AG04449 (cell line): ENCODE measurements at regions of chr5 and their contacts with region 1.

Region 1: DNA sequence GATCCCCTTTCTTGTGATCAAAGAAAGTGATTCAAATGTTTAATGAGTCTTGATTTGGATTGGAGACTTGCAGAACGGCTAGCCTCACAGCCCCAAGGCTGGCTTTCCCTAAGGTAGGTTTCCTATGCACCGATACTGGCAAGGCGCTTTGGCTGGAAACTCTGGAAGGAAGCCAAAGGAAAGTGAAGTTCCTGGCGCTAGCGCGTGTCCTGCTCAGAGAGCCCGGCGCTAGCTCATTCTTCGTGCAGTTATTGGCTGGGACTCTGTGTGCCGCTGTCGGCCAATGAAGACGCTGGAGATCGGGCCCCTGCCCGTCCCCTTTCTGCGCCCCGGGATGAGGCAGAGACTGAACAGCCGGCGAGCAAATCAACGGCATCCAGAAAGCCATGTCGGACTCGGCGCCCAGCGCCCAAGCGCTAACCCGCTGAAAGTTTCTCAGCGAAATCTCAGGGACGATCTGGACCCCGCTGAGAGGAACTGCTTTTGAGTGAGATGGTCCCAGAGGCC is at the start of gene PCDHGC3:
- DNase-seq: peak; percentile 77
- H3K4me3 ChIP-seq: peak within 1 kb of the TSS; percentile 84
- CTCF ChIP-seq: peak; percentile 50

Region 2: GRCh38 chr5:141420855-141421496 is 54.7 kb before region 1 on chr5 and contains the start of gene PCDHGA11:
- CTCF ChIA-PET with region 1: interaction called, 11 read pairs
- POLR2A ChIA-PET with region 1: no interaction called
- DNase-seq: no peak
- H3K4me3 ChIP-seq: peak within 1 kb of the TSS; percentile 57
- CTCF ChIP-seq: peak; percentile 41

Region 3: DNA sequence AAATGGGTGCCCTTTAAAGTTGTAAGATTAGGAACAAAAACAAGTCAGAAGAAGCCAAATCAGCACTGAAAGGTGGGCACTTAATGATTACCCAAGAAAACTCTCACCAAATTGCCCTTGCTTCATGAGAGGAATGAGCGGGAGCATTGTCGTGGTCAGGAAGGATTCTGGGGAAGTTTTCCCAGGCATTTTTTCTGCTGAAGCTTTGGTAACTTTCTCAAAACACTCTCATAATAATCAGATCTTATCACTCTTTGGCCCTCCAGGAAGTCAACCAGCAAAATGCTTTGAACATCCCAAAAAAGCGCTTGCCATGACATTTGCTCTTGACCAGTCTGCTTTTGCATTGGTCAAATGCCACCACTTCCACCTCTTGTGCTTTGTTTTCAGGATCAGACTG is 10.3 kb before region 1 on chr5:
- CTCF ChIA-PET with region 1: interaction called, 37 read pairs
- POLR2A ChIA-PET with region 1: no interaction called
- DNase-seq: no peak
- H3K4me3 ChIP-seq: no peak overlapping the region
- CTCF ChIP-seq: no peak

Region 4: GRCh38 chr5:141492168-141492885 is 16.6 kb after region 1 on chr5:
- CTCF ChIA-PET with region 1: interaction called, 36 read pairs
- POLR2A ChIA-PET with region 1: interaction called, 5 read pairs
- DNase-seq: no peak
- H3K4me3 ChIP-seq: no peak overlapping the region
- CTCF ChIP-seq: no peak

Region 5: GRCh38 chr5:141512390-141512910 is 36.8 kb after region 1 on chr5:
- CTCF ChIA-PET with region 1: interaction called, 856 read pairs
- POLR2A ChIA-PET with region 1: interaction called, 16 read pairs
- DNase-seq: no peak
- H3K4me3 ChIP-seq: peak overlapping the region; percentile 52
- CTCF ChIP-seq: peak; percentile 80

Region 6: GRCh38 chr5:141524604-141525597 is 49.2 kb after region 1 on chr5:
- CTCF ChIA-PET with region 1: interaction called, 856 read pairs
- POLR2A ChIA-PET with region 1: interaction called, 5 read pairs
- DNase-seq: peak; percentile 76
- H3K4me3 ChIP-seq: peak overlapping the region; percentile 29
- CTCF ChIP-seq: peak; percentile 97

Region 7: GRCh38 chr5:142145106-142145900 is 669.6 kb after region 1 on chr5:
- CTCF ChIA-PET with region 1: no interaction called
- POLR2A ChIA-PET with region 1: no interaction called
- DNase-seq: no peak
- H3K4me3 ChIP-seq: no peak overlapping the region
- CTCF ChIP-seq: peak; percentile 72